ENCODE measurements at regions of chr2 and their contacts with region 1.

Region 1: GRCh38 chr2:98654699-98655495 is 46.5 kb downstream of the UNC50 start:
- DNase-seq: no peak
- ATAC-seq: no peak
- H3K4me3 ChIP-seq: no peak overlapping the region
- H3K27ac ChIP-seq: no peak overlapping the region
- H3K4me1 ChIP-seq: no peaks in the 10 kb centered on the region
- H3K27me3 ChIP-seq: no peaks in the 10 kb centered on the region
- CTCF ChIP-seq: no peak

Region 2: GRCh38 chr2:98419977-98420725 is 234.7 kb before region 1 on chr2:
- CTCF ChIA-PET with region 1: no interaction called
- POLR2A ChIA-PET with region 1: no interaction called
- intact Hi-C with region 1: no loop called
- DNase-seq: peak; percentile 14
- ATAC-seq: no peak
- H3K4me3 ChIP-seq: no peak overlapping the region
- H3K27ac ChIP-seq: no peak overlapping the region
- H3K4me1 ChIP-seq: no peaks in the 10 kb centered on the region
- H3K27me3 ChIP-seq: no peaks in the 10 kb centered on the region
- CTCF ChIP-seq: no peak

Region 3: DNA sequence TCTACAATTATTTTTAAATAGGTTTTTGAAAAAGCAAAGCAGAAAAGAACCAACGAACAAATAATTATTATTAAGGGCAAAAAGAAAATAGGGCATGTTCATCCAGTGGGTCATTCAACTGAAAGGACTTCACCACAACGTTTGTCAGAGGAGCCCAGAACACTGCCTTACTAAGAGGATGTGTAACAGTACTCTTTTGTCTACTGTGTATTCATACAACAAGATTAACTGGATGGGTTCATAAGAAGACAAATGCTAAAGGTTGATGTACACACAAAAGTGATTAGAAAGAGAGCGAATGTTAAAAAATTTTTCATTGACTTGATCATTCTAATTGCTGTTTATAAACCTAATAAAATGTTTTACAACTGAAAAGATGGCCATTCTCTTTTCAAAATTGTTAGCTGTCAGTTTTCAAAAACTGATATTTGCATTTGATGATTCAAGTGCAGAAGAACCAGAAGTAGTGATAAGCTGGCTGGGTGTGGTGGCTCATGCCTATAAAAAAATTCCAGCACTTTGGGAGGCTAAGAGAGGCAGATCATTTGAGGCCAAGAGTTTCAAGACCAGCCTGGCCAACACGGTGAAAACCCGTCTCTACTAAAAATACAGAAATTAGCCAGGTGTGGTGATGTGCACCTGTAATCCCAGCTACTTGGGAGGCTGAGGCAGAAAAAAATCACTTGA is 42.9 kb after region 1 on chr2:
- CTCF ChIA-PET with region 1: no interaction called
- POLR2A ChIA-PET with region 1: no interaction called
- intact Hi-C with region 1: loop called (anchors 5 kb)
- DNase-seq: peak; percentile 77
- ATAC-seq: peak; percentile 87
- H3K4me3 ChIP-seq: no peak overlapping the region
- H3K27ac ChIP-seq: peak overlapping the region; percentile 26; the same call in 1 of the 2 replicates
- H3K4me1 ChIP-seq: peaks cover 30% of the 10 kb centered on the region
- H3K27me3 ChIP-seq: no peaks in the 10 kb centered on the region
- CTCF ChIP-seq: no peak

Region 4: DNA sequence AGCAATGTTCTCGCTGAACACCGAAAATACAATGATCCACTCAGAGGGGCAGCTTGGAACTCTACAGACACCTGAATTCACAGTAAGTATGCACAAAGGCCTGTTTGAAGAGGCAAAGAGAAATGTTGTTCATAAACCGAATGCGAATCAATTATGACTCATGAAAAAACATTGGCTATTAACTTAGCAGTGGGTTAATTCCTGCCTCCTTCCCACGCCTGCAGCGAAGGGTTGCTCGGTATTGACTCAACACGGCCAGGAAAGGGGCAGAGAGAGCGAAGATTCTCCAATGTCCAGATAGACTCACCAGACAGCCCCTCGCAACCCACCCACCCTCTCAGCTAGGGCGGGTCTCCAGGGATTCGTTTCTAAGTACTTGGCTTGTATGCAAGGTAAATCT is 271.7 kb after region 1 on chr2:
- CTCF ChIA-PET with region 1: no interaction called
- POLR2A ChIA-PET with region 1: no interaction called
- intact Hi-C with region 1: no loop called
- DNase-seq: peak; percentile 26
- ATAC-seq: peak; percentile 33; the same call in 1 of the 2 replicates
- H3K4me3 ChIP-seq: no peak overlapping the region
- H3K27ac ChIP-seq: no peak overlapping the region
- H3K4me1 ChIP-seq: peaks cover 8% of the 10 kb centered on the region
- H3K27me3 ChIP-seq: no peaks in the 10 kb centered on the region
- CTCF ChIP-seq: no peak